ENCODE measurements at regions of chr19 and their contacts with region 1.

Region 1: DNA sequence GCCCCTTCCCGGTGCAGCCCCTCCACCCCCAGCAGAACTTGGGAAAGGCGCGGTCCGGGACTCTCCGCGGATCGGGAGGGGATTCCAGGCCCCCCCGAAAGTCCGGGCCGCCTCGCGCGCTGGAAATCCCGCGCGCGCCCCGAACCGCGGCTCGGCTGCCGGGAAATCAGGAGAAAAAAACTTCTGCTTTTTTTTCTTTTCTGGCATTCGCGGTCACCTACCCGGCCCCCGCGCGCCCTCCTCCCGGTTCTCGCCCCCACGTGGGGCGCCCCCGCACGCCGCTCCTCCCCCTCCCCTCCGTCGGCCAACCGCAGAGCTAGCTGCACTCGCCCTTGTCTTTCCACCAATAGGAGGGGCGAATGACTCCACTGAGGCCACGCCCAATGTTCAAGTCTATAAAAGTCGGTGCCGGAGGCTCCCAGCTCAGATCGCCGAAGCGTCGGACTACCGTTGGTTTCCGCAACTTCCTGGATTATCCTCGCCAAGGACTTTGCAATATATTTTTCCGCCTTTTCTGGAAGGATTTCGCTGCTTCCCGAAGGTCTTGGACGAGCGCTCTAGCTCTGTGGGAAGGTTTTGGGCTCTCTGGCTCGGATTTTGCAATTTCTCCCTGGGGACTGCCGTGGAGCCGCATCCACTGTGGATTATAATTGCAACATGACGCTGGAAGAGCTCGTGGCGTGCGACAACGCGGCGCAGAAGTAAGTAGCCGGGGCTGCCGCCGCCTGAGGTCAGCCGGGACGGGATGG is at the start of gene GADD45B:
- DNase-seq: peak; percentile 98
- H3K4me3 ChIP-seq: peak within 1 kb of the TSS; percentile 83 to 89 (median 89)
- H3K27ac ChIP-seq: peak within 1 kb of the TSS; percentile 90
- H3K4me1 ChIP-seq: peaks cover 19% of the 10 kb centered on the region
- H3K27me3 ChIP-seq: no peaks in the 10 kb centered on the region
- CTCF ChIP-seq: no peak
- POLR2A ChIP-seq: peak; percentile 100
- total RNA-seq, gene GADD45B: 61.3 and 75.9 TPM in 2 replicates

Region 2: DNA sequence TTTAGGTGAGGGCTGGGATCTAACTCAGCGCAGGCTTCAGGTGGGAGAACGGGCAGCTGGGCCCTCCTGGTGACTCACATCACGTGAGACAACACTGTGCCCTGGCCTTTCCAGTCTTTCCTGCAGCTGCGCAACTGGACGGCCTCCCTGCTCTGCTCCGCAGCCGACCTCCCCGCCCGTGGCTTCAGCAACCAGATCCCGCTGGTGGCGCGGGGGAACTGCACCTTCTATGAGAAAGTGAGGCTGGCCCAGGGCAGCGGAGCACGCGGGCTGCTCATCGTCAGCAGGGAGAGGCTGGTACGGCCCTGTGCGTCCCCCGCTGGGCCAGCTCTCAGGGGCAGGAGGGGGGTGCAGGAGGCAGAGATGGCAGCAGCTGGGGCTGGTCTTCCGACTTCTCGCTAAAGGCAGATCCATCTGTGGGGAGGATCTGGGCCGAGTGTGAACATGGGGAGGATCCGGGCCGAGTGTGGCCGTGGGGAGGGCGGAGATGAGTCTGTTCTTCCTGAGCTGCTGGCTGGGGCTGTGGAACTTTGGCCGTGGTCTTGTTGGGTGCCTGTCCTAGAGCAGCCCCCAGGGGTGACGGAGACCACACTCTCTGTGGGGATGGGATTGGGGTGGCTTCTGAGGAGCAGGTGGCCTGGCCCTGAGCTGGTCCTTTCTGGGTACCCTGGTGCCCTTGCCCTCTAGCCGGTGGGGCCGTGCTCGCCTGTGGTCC is 138.4 kb before region 1 on chr19:
- CTCF ChIA-PET with region 1: no interaction called
- POLR2A ChIA-PET with region 1: no interaction called
- dilution Hi-C with region 1: no loop called
- intact Hi-C with region 1: no loop called
- DNase-seq: no peak
- H3K4me3 ChIP-seq: no peak overlapping the region
- H3K27ac ChIP-seq: no peak overlapping the region
- H3K4me1 ChIP-seq: no peaks in the 10 kb centered on the region
- H3K27me3 ChIP-seq: no peaks in the 10 kb centered on the region
- CTCF ChIP-seq: no peak
- POLR2A ChIP-seq: no peak

Region 3: DNA sequence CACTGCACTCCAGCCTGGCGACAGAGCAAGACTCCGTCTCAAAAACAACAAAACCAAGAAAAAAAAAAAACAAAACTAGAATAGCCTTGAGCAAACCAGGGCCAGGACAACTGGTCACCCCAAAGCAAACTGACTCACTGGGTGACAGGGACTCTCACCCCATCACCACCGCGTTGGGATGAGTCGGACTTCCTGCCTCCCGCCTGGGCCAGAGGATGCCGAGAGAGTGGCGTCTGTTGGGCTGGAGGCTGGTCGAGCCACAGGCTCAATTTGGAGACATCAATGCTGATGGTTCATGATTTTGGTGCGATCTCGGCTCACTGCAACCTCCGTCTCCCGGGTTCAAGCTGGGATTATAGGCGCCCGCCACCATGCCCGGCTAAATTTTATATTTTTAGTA is 104.2 kb before region 1 on chr19:
- CTCF ChIA-PET with region 1: no interaction called
- POLR2A ChIA-PET with region 1: no interaction called
- dilution Hi-C with region 1: no loop called
- intact Hi-C with region 1: no loop called
- DNase-seq: no peak
- H3K4me3 ChIP-seq: no peak overlapping the region
- H3K27ac ChIP-seq: no peak overlapping the region
- H3K4me1 ChIP-seq: no peaks in the 10 kb centered on the region
- H3K27me3 ChIP-seq: peaks cover 0 to 2% of the 10 kb centered on the region in 2 experiments
- CTCF ChIP-seq: no peak
- POLR2A ChIP-seq: no peak

Region 4: DNA sequence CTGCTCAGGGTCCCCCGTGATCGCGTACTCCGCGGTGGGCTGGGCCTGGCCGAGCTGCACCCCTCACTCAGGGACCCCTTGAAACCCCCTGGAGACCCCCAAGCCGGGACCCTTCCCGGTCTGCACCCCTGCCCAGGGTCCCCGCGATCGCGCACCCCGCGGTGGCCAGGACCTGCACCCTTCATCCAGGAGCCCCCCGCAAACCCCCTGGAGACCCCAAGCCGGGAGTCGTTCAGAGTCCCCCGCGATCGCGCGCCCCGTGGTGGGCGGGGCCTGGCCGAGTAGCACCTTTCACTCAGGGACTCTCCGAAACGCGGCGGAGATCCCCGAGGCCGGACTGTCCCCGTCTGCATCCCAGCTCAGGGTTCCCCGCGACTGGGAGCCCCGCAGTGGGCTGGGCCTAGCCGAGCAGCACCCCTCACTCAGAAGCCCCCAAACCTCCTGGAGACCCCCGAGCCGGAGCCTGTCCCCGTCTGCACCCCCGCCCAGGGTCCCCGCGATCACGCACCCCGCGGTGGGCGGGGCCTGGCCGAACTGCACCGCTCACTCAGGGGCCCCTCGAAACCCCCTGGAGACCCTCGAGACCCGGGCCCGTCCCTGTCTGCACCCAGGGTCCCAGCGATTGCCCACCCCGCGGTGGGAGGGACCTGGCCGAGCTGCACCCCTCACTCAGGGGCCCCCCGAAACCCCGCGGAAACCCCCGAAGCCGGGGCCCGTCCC is 19.9 kb before region 1 on chr19:
- CTCF ChIA-PET with region 1: interaction called, 3 read pairs
- POLR2A ChIA-PET with region 1: interaction called, 18 read pairs
- dilution Hi-C with region 1: no loop called
- intact Hi-C with region 1: no loop called
- DNase-seq: no peak
- H3K4me3 ChIP-seq: peak overlapping the region; percentile 69 to 100 (median 80)
- H3K27ac ChIP-seq: peak overlapping the region; percentile 68
- H3K4me1 ChIP-seq: peaks cover 13% of the 10 kb centered on the region
- H3K27me3 ChIP-seq: no peaks in the 10 kb centered on the region
- CTCF ChIP-seq: no peak
- POLR2A ChIP-seq: no peak

Region 5: GRCh38 chr19:2494444-2495129 is 18.7 kb after region 1 on chr19:
- CTCF ChIA-PET with region 1: no interaction called
- POLR2A ChIA-PET with region 1: interaction called, 18 read pairs
- dilution Hi-C with region 1: no loop called
- intact Hi-C with region 1: loop called (anchors 1 kb)
- DNase-seq: peak; percentile 57
- H3K4me3 ChIP-seq: peak overlapping the region; percentile 41 to 60 (median 50)
- H3K27ac ChIP-seq: peak overlapping the region; percentile 88
- H3K4me1 ChIP-seq: peaks cover 22% of the 10 kb centered on the region
- H3K27me3 ChIP-seq: no peaks in the 10 kb centered on the region
- CTCF ChIP-seq: no peak
- POLR2A ChIP-seq: no peak

Region 6: DNA sequence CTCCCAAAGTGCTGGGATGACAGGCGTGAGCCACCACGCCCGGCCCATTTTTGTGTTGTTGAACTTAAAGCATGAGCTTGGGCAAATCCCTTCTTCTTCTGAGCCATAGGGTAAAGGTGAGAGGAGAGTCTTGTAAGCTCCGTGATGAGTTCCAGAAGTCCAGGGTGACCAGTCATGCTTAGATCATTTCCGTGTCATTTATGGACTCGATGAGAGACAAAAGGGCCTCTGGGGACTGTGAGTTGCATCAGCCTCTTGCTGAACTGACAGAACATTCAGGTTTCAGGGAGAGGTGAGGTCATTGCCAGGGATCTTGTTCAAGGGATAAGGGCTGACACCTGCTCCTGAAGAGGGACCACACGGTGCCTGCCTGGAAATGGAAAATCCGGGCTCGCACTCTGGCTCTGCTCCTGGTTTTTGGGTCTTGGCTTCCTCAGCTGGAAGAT is 53.6 kb after region 1 on chr19:
- CTCF ChIA-PET with region 1: interaction called, 7 read pairs
- POLR2A ChIA-PET with region 1: interaction called, 53 read pairs
- dilution Hi-C with region 1: no loop called
- intact Hi-C with region 1: no loop called
- DNase-seq: peak; percentile 75
- H3K4me3 ChIP-seq: no peak overlapping the region
- H3K27ac ChIP-seq: peak overlapping the region; percentile 75
- H3K4me1 ChIP-seq: peaks cover 36% of the 10 kb centered on the region
- H3K27me3 ChIP-seq: no peaks in the 10 kb centered on the region
- CTCF ChIP-seq: no peak
- POLR2A ChIP-seq: no peak

Region 7: GRCh38 chr19:2552859-2553258 is 77.0 kb after region 1 on chr19:
- CTCF ChIA-PET with region 1: interaction called, 5 read pairs
- POLR2A ChIA-PET with region 1: interaction called, 75 read pairs
- dilution Hi-C with region 1: no loop called
- intact Hi-C with region 1: loop called (anchors 1 kb)
- DNase-seq: peak; percentile 56
- H3K4me3 ChIP-seq: peak overlapping the region; percentile 20 to 73 (median 24)
- H3K27ac ChIP-seq: peak overlapping the region; percentile 72
- H3K4me1 ChIP-seq: peaks cover 22% of the 10 kb centered on the region
- H3K27me3 ChIP-seq: no peaks in the 10 kb centered on the region
- CTCF ChIP-seq: no peak
- POLR2A ChIP-seq: no peak

Region 8: DNA sequence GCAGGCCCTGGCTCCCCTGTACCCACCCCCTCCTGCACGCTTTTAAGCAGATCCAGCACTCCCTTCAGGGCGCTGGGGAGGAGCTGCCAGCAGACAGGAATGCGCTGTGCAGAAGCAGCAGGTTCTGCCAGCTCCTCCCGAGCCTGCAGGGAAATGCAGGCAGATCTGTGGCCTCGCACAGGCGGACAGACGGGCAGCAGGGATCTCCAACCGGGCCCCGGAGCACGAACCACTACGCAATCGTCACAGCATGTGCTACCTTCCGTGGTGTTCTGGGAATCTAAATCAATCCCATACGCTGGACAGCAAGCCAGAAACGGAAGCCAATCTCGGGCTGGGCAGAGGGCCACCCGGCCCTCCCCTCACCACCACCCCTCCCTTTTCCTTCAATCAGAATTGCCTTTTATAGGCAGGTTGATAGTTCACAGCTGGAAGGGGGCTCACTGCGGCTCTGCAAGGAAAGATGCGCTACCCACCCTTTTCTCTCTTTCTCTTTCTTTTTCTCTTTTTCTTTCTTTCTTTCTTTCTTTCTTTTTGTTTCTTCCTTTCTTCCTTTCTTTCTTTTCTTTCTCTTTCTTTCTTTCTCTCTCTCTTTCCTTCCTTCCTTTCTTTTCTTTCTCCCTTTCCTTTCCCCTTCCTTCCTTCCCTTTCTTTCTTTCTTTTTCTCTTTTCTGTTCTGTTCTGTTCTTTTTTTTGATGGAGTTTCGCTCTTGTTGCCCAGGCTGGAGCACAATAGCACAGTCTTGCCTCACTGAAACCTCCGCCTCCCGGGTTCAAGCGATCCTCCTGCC is 126.7 kb after region 1 on chr19:
- CTCF ChIA-PET with region 1: interaction called, 209 read pairs
- POLR2A ChIA-PET with region 1: interaction called, 27 read pairs
- dilution Hi-C with region 1: no loop called
- intact Hi-C with region 1: no loop called
- DNase-seq: peak; percentile 37
- H3K4me3 ChIP-seq: no peak overlapping the region
- H3K27ac ChIP-seq: no peak overlapping the region
- H3K4me1 ChIP-seq: peaks cover 15% of the 10 kb centered on the region
- H3K27me3 ChIP-seq: no peaks in the 10 kb centered on the region
- CTCF ChIP-seq: no peak
- POLR2A ChIP-seq: no peak

Region 9: GRCh38 chr19:2627319-2627829 is 151.5 kb after region 1 on chr19:
- CTCF ChIA-PET with region 1: interaction called, 3 read pairs
- POLR2A ChIA-PET with region 1: interaction called, 13 read pairs
- dilution Hi-C with region 1: no loop called
- intact Hi-C with region 1: no loop called
- DNase-seq: peak; percentile 94
- H3K4me3 ChIP-seq: no peak overlapping the region
- H3K27ac ChIP-seq: peak overlapping the region; percentile 93
- H3K4me1 ChIP-seq: peaks cover 20% of the 10 kb centered on the region
- H3K27me3 ChIP-seq: no peaks in the 10 kb centered on the region
- CTCF ChIP-seq: no peak
- POLR2A ChIP-seq: no peak